RWPE1 (cell line): ENCODE measurements at regions of chr1 and their contacts with region 1.

Region 1: GRCh38 chr1:13604176-13604575 is 20.5 kb downstream of the PDPN start:
- DNase-seq: no peak
- H3K27ac ChIP-seq: peak overlapping the region; percentile 63
- CTCF ChIP-seq: no peak

Region 2: GRCh38 chr1:13965770-13966398 is 361.7 kb after region 1 on chr1:
- CTCF ChIA-PET with region 1: interaction called, 11 read pairs
- POLR2A ChIA-PET with region 1: no interaction called
- DNase-seq: peak; percentile 78
- H3K27ac ChIP-seq: no peak overlapping the region
- CTCF ChIP-seq: peak; percentile 67